ENCODE measurements at regions of chr11 and their contacts with region 1.

Region 1: GRCh38 chr11:65569973-65570918 is at the start of gene ZNRD2:
- DNase-seq: peak; percentile 100
- ATAC-seq: peak; percentile 75
- H3K4me3 Mint-ChIP-seq: peak within 1 kb of the TSS; percentile 97
- H3K27ac Mint-ChIP-seq: peak within 1 kb of the TSS; percentile 96
- H3K4me1 Mint-ChIP-seq: peaks cover 60% of the 10 kb centered on the region
- H3K27me3 Mint-ChIP-seq: no peaks in the 10 kb centered on the region
- total RNA-seq, gene ZNRD2: 50.7 to 56.4 TPM

Region 2: GRCh38 chr11:65027213-65028067 is 542.8 kb before region 1 on chr11 and contains the start of gene SNX15:
- CTCF ChIA-PET with region 1: no interaction called
- POLR2A ChIA-PET with region 1: no interaction called
- intact Hi-C with region 1: loop called in 1 of 2 experiments (anchors 1 kb)
- DNase-seq: peak; percentile 94
- ATAC-seq: peak; percentile 91
- H3K4me3 Mint-ChIP-seq: peak within 1 kb of the TSS; percentile 73
- H3K27ac Mint-ChIP-seq: peak within 1 kb of the TSS; percentile 86
- H3K4me1 Mint-ChIP-seq: peaks cover 21% of the 10 kb centered on the region
- H3K27me3 Mint-ChIP-seq: no peaks in the 10 kb centered on the region
- total RNA-seq, gene SNX15: 12.1 to 14.2 TPM

Region 3: DNA sequence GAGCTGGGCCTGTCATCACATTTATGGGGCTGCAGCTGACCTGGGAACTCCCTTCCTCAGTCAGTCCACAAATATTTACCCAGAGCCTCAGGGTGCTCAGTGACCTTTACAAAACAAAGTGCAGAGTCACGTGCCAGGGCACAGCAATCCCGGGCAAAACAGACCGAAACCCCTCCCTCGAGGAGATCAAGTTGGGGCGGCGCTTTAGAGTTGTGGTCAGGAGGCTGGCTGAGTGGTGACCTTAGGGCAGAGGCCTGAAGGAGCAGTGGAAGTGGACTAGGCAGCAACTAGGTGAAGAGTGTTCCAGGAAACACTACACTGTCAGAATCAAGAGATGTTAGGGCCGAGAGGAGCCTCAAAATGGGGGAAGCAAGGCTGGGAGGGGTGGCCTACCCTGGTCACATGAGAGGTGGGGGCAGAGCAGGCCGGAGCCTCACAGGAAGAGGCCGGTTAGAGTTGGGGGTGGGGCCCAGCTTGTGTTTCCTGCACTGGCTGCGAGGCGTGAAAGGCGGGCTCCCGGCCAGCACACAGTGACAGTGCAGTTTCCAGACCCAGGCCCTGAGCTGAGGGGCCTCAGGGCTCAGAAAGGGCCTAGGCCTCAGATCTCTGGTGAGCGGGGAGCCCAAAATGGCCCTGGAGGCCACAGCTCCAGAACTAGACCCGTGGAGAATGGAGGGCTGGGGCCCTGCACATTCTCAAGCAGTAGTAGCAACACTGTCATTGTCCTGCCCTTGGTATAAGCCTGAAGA is 151.4 kb before region 1 on chr11:
- CTCF ChIA-PET with region 1: interaction called, 5 read pairs
- POLR2A ChIA-PET with region 1: interaction called, 7 read pairs
- intact Hi-C with region 1: loop called in 1 of 2 experiments (anchors 1 kb)
- DNase-seq: peak; percentile 97
- ATAC-seq: peak; percentile 48
- H3K4me3 Mint-ChIP-seq: peak overlapping the region; percentile 100
- H3K27ac Mint-ChIP-seq: peak overlapping the region; percentile 99
- H3K4me1 Mint-ChIP-seq: peaks cover 34% of the 10 kb centered on the region
- H3K27me3 Mint-ChIP-seq: peaks cover 6% of the 10 kb centered on the region

Region 4: DNA sequence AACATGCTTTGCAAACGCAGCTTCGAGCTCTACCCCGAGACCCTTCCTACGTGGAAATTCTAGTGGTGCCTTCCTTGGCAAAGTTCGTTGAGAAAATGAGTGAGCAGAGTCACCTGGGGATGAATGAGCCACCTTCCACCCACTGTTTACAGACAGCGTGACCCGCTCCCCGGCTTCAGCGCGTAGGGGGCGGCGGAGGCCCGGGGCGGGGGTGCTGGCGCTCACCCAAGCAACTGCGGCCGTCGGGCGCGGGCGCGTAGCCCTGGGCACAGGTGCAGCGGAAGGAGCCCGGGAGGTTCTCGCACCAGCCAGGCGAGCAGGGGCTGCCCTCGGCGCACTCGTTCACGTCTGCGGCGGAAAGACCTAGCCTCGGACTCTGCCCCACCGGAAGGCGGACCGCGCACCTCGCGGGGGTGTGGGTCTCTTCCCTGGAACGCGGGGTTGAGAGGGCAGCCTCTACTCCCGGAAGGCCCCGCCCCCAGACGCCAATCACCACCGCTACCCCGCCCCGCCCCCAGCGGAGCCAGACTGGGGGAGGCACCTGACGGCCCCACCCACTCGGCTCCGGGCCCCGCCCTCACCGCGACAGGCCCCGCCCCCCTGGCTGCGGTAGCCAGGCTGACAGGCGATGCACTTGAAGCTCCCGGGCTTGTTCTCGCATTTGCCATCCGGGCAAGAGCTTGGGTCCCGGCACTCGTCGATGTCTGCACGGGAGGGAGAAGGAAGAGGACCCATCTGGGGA is 23.9 kb before region 1 on chr11:
- CTCF ChIA-PET with region 1: interaction called, 42 read pairs
- POLR2A ChIA-PET with region 1: interaction called, 3 read pairs
- intact Hi-C with region 1: loop called in 1 of 2 experiments (anchors 1 kb)
- DNase-seq: peak; percentile 99
- ATAC-seq: peak; percentile 85
- H3K4me3 Mint-ChIP-seq: peak overlapping the region; percentile 72
- H3K27ac Mint-ChIP-seq: peak overlapping the region; percentile 87
- H3K4me1 Mint-ChIP-seq: peaks cover 46% of the 10 kb centered on the region
- H3K27me3 Mint-ChIP-seq: no peaks in the 10 kb centered on the region

Region 5: DNA sequence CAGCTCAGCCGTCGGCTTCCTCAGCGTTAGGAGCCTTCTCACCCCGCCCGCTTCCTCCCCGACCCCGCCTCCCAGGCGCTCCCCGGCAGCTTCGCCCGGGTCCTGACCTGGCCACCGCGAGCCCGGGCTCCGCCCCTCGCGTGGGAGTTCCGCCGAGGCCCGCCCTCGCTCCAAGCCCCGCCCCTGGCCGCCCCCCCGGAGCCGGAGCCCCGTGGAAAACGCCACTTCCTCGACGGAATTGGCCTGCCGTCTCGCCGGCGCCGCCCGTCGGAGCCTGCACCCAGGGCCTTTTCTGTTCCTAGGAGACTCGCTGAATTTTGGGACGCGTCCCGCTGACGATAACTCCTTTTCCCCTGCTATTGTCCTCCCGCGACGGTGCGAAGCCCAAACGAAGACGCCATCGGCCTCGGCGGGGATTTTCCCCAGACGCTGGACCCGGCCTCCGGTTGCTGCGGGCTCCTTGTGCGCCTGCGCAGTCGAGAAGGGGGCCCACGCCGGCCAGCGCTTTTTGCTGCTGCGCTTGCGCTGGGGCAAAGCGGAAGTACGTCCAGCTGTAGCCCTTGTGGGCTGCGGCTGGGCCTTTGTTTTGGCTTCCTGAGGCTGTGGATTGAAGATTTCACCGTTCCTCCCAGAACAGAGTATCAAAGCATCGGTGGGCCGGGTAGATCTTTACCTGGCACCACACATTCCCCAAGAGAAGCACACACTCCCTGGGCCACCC is 82.4 kb after region 1 on chr11:
- CTCF ChIA-PET with region 1: interaction called, 4 read pairs
- POLR2A ChIA-PET with region 1: interaction called, 3 read pairs
- intact Hi-C with region 1: loop called in 1 of 2 experiments (anchors 1 kb)
- DNase-seq: peak; percentile 98
- ATAC-seq: peak; percentile 89
- H3K4me3 Mint-ChIP-seq: peak overlapping the region; percentile 79
- H3K27ac Mint-ChIP-seq: peak overlapping the region; percentile 95
- H3K4me1 Mint-ChIP-seq: peaks cover 45% of the 10 kb centered on the region
- H3K27me3 Mint-ChIP-seq: no peaks in the 10 kb centered on the region

Region 6: GRCh38 chr11:65680192-65680743 is 110.0 kb after region 1 on chr11:
- CTCF ChIA-PET with region 1: no interaction called
- POLR2A ChIA-PET with region 1: no interaction called
- intact Hi-C with region 1: no loop called
- DNase-seq: no peak
- ATAC-seq: no peak
- H3K4me3 Mint-ChIP-seq: no peak overlapping the region
- H3K27ac Mint-ChIP-seq: no peak overlapping the region
- H3K4me1 Mint-ChIP-seq: no peaks in the 10 kb centered on the region
- H3K27me3 Mint-ChIP-seq: peaks cover 2% of the 10 kb centered on the region

Region 7: GRCh38 chr11:65888163-65888814 is 318.0 kb after region 1 on chr11 and contains the start of gene FIBP:
- CTCF ChIA-PET with region 1: interaction called, 3 read pairs
- POLR2A ChIA-PET with region 1: no interaction called
- intact Hi-C with region 1: loop called in 1 of 2 experiments (anchors 2 kb)
- DNase-seq: peak; percentile 99
- ATAC-seq: peak; percentile 68
- H3K4me3 Mint-ChIP-seq: peak within 1 kb of the TSS; percentile 94
- H3K27ac Mint-ChIP-seq: peak within 1 kb of the TSS; percentile 95
- H3K4me1 Mint-ChIP-seq: peaks cover 57% of the 10 kb centered on the region
- H3K27me3 Mint-ChIP-seq: no peaks in the 10 kb centered on the region
- total RNA-seq, gene FIBP: 95.4 to 121 TPM

Region 8: GRCh38 chr11:66268283-66268951 is 698.2 kb after region 1 on chr11 and contains the start of gene RAB1B:
- CTCF ChIA-PET with region 1: no interaction called
- POLR2A ChIA-PET with region 1: no interaction called
- intact Hi-C with region 1: loop called in 1 of 2 experiments (anchors 5 kb)
- DNase-seq: peak; percentile 100
- ATAC-seq: peak; percentile 88
- H3K4me3 Mint-ChIP-seq: peak within 1 kb of the TSS; percentile 100
- H3K27ac Mint-ChIP-seq: peak within 1 kb of the TSS; percentile 97
- H3K4me1 Mint-ChIP-seq: peaks cover 28% of the 10 kb centered on the region
- H3K27me3 Mint-ChIP-seq: no peaks in the 10 kb centered on the region
- total RNA-seq, gene RAB1B: 114 to 147 TPM

Measured in activated CD4-positive, alpha-beta T cell treated with anti-CD3 and anti-CD28 coated beads for 36 hours (primary cell).